CD8-positive, alpha-beta T cell (primary cell): ENCODE measurements at regions of chr21 and their contacts with region 1.

Region 1: GRCh38 chr21:40707656-40708244 is 139.2 kb downstream of the DSCAM start:
- DNase-seq: no peak
- ATAC-seq: no peak
- H3K4me3 ChIP-seq: no peak overlapping the region
- H3K4me3 Mint-ChIP-seq: no peak overlapping the region
- H3K27ac ChIP-seq: no peak overlapping the region
- H3K27ac Mint-ChIP-seq: no peak overlapping the region
- H3K4me1 ChIP-seq: no peaks in the 10 kb centered on the region
- H3K4me1 Mint-ChIP-seq: no peaks in the 10 kb centered on the region
- H3K27me3 ChIP-seq: no peaks in the 10 kb centered on the region
- H3K27me3 Mint-ChIP-seq: peaks cover 4% of the 10 kb centered on the region
- CTCF ChIP-seq: no peak

Region 2: GRCh38 chr21:40647706-40648105 is 60.0 kb before region 1 on chr21:
- CTCF ChIA-PET with region 1: no interaction called
- POLR2A ChIA-PET with region 1: no interaction called
- intact Hi-C with region 1: loop called in 1 of 2 experiments (anchors 2 kb)
- DNase-seq: no peak
- ATAC-seq: no peak
- H3K4me3 ChIP-seq: no peak overlapping the region
- H3K4me3 Mint-ChIP-seq: no peak overlapping the region
- H3K27ac ChIP-seq: no peak overlapping the region
- H3K27ac Mint-ChIP-seq: no peak overlapping the region
- H3K4me1 ChIP-seq: no peaks in the 10 kb centered on the region
- H3K4me1 Mint-ChIP-seq: no peaks in the 10 kb centered on the region
- H3K27me3 ChIP-seq: no peaks in the 10 kb centered on the region
- H3K27me3 Mint-ChIP-seq: no peaks in the 10 kb centered on the region
- CTCF ChIP-seq: no peak